K562 (cell line): ENCODE measurements at regions of chr4 and their contacts with region 1.

Region 1: GRCh38 chr4:120156120-120156718 is 89.6 kb upstream of the MAD2L1 start:
- DNase-seq: peak; percentile 9 to 70 (median 22)
- ATAC-seq: peak; percentile 72
- H3K4me3 ChIP-seq: no peak overlapping the region
- H3K27ac ChIP-seq: no peak overlapping the region
- H3K4me1 ChIP-seq: no peaks in the 10 kb centered on the region
- H3K27me3 ChIP-seq: no peaks in the 10 kb centered on the region
- CTCF ChIP-seq: peak in 2 of 3 experiments; percentile 41 to 68; a peak in 4 of 6 replicates
- EP300 ChIP-seq: no peak
- POLR2A ChIP-seq: no peak
- RAD21 ChIP-seq: peak; percentile 50 to 71

Region 2: DNA sequence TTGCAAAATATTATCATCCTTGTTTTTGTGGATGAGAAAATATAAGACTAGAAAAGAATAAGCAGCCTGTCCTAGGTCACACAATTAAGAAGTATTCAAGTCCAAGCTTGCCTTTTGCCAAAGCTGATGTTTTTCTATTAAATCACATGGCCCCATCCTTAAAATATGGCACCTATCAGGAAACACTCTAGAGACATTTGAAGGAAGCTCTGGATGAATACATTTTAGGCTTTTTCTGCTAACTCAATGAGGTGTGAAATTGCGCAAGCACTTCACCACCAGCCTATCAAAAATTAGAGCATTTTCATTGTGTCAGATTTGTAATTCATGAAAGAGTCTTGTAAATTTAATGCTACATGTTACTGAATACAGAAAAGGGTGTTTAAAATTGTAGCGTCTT is 161.5 kb after region 1 on chr4:
- CTCF ChIA-PET with region 1: no interaction called
- POLR2A ChIA-PET with region 1: no interaction called
- in situ Hi-C with region 1: no loop called
- intact Hi-C with region 1: no loop called
- DNase-seq: no peak
- ATAC-seq: no peak
- H3K4me3 ChIP-seq: no peak overlapping the region
- H3K27ac ChIP-seq: no peak overlapping the region
- H3K4me1 ChIP-seq: no peaks in the 10 kb centered on the region
- H3K27me3 ChIP-seq: no peaks in the 10 kb centered on the region
- CTCF ChIP-seq: no peak
- EP300 ChIP-seq: no peak
- POLR2A ChIP-seq: no peak
- RAD21 ChIP-seq: no peak

Region 3: DNA sequence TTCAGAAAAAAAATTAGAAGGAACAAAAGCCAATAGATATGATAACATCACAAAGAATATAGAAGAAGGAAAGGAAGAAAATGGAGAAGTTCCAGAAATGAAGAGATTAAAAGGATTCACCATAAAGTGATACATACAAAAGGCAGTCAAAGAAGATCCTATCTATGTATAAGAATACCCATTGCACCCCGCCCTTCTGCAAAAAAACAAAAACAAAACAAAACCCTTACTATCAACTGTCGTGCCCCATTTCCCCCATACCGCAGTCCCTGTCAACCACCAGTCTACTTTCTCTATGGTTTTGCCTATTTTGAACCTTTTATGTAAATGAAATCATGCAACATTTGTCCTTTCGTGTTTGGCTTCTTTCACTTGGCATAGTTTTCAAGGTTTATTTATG is 380.7 kb after region 1 on chr4:
- CTCF ChIA-PET with region 1: no interaction called
- POLR2A ChIA-PET with region 1: no interaction called
- in situ Hi-C with region 1: no loop called
- intact Hi-C with region 1: no loop called
- DNase-seq: no peak
- ATAC-seq: no peak
- H3K4me3 ChIP-seq: no peak overlapping the region
- H3K27ac ChIP-seq: no peak overlapping the region
- H3K4me1 ChIP-seq: no peaks in the 10 kb centered on the region
- H3K27me3 ChIP-seq: no peaks in the 10 kb centered on the region
- CTCF ChIP-seq: no peak
- EP300 ChIP-seq: no peak
- POLR2A ChIP-seq: no peak
- RAD21 ChIP-seq: no peak

Region 4: GRCh38 chr4:120809518-120809917 is 653.3 kb after region 1 on chr4:
- CTCF ChIA-PET with region 1: no interaction called
- POLR2A ChIA-PET with region 1: no interaction called
- in situ Hi-C with region 1: no loop called
- intact Hi-C with region 1: loop called (anchors 1 kb)
- DNase-seq: no peak
- ATAC-seq: no peak
- H3K4me3 ChIP-seq: no peak overlapping the region
- H3K27ac ChIP-seq: no peak overlapping the region
- H3K4me1 ChIP-seq: no peaks in the 10 kb centered on the region
- H3K27me3 ChIP-seq: no peaks in the 10 kb centered on the region
- CTCF ChIP-seq: peak in 1 of 3 experiments; percentile 38; a peak in 2 of 6 replicates
- EP300 ChIP-seq: no peak
- POLR2A ChIP-seq: no peak
- RAD21 ChIP-seq: peak in 1 of 2 experiments; percentile 26; a peak in 2 of 4 replicates

Region 5: GRCh38 chr4:121096629-121097028 is 940.4 kb after region 1 on chr4:
- CTCF ChIA-PET with region 1: interaction called, 3 read pairs
- POLR2A ChIA-PET with region 1: no interaction called
- in situ Hi-C with region 1: no loop called
- intact Hi-C with region 1: loop called (anchors 1 kb)
- DNase-seq: peak in 1 of 4 experiments; percentile 6
- ATAC-seq: no peak
- H3K4me3 ChIP-seq: no peak overlapping the region
- H3K27ac ChIP-seq: no peak overlapping the region
- H3K4me1 ChIP-seq: no peaks in the 10 kb centered on the region
- H3K27me3 ChIP-seq: no peaks in the 10 kb centered on the region
- CTCF ChIP-seq: peak in 1 of 3 experiments; percentile 34; a peak in 2 of 6 replicates
- EP300 ChIP-seq: no peak
- POLR2A ChIP-seq: no peak
- RAD21 ChIP-seq: peak; percentile 30 to 41; a peak in 3 of 4 replicates

Region 6: DNA sequence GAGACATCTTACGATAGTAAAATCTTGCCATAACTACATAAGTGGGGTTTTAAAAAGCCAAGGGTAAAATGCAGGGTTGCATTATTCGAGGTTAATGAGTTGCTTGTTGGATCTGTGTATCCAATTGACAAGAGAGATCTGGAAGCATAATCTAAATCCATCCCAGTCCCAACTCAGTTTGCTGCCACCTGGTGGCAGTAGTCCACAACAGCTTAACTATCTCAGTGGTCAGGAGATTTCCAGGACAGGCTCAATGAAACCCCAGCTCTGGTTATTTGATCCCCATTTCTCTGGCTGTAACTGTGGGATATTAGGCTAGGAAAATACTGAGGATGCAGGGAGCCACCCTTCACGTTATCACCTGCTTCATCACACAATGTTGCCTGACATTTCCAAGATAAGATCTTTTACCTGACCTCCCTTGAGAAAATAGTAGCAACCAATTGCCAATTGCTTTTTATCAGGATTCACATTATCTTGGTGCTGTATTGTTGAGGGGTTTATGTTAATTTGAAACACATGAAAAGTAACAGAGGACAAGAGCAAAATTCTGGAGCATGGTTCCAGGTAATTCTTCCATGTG is 1096.1 kb after region 1 on chr4:
- CTCF ChIA-PET with region 1: no interaction called
- POLR2A ChIA-PET with region 1: no interaction called
- in situ Hi-C with region 1: no loop called
- intact Hi-C with region 1: loop called (anchors 1 kb)
- DNase-seq: peak; percentile 67 to 74 (median 69)
- ATAC-seq: peak; percentile 93
- H3K4me3 ChIP-seq: no peak overlapping the region
- H3K27ac ChIP-seq: no peak overlapping the region
- H3K4me1 ChIP-seq: no peaks in the 10 kb centered on the region
- H3K27me3 ChIP-seq: no peaks in the 10 kb centered on the region
- CTCF ChIP-seq: peak; percentile 68 to 71 (median 69)
- EP300 ChIP-seq: no peak
- POLR2A ChIP-seq: no peak
- RAD21 ChIP-seq: peak; percentile 44 to 54

Region 7: GRCh38 chr4:121736735-121737351 is 1580.6 kb after region 1 on chr4:
- CTCF ChIA-PET with region 1: no interaction called
- POLR2A ChIA-PET with region 1: no interaction called
- in situ Hi-C with region 1: no loop called
- intact Hi-C with region 1: loop called (anchors 10 kb)
- DNase-seq: peak; percentile 31 to 68 (median 48)
- ATAC-seq: peak; percentile 88
- H3K4me3 ChIP-seq: no peak overlapping the region
- H3K27ac ChIP-seq: no peak overlapping the region
- H3K4me1 ChIP-seq: no peaks in the 10 kb centered on the region
- H3K27me3 ChIP-seq: peaks cover 7 to 19% of the 10 kb centered on the region in 2 experiments
- CTCF ChIP-seq: peak; percentile 58 to 75 (median 75)
- EP300 ChIP-seq: no peak
- POLR2A ChIP-seq: no peak
- RAD21 ChIP-seq: peak; percentile 65 to 78